ENCODE measurements at regions of chr1 and their contacts with region 1.

Region 1: DNA sequence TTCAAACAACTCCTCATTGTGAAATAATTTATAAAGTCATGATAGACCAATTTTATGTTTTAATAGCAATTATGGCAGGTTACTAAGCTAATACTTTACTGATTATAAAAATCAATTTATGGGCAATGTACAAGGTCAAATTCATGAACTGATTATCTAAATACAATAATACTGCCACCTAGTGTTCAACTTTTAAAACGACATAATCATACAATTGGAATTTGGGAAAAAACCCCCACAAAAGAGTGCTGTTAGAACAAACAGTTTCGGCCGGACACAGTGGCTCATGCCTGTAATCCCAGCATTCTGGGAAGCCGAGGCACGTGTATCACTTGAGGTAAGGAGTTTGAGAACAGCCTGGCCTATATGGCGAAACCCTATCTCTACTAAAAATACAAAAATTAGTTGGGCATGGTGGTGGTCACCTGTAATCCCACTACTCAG is 14.0 kb downstream of the GTF2B start:
- DNase-seq: peak in 1 of 4 donors; percentile 25
- ATAC-seq: no peak
- H3K4me3 ChIP-seq: no peak overlapping the region
- H3K27ac ChIP-seq: no peak overlapping the region
- H3K4me1 ChIP-seq: peaks cover 0 to 53% of the 10 kb centered on the region in 2 donors
- H3K27me3 ChIP-seq: no peaks in the 10 kb centered on the region
- CTCF ChIP-seq: peak; percentile 41 to 54

Region 2: DNA sequence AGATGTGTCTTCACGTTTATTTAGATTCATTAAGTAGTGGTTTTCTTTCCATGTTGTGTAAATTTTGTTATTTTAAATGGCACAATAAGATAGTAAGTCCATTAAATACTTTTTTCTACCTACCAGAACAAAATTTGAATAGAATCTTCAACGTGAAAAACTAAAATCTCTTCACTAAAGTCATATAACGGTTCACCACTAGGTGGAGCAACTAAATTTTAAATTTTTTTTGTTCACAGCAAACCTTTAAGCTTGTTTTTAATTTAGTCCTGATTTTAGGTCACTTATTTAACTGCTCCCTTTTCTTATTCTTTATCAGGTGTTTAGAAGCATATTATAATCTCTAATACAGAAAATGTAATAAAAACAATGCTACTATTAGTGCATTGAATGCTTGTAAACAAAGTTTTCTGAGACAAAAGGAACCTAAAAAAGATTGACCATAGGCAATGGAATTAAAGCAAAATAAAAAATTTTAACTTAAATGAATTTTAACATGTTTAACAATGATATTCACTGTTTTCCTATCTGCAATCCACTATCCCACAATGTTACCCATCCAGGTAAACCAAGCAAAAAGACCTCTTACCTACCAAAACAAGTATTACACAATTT is 221.6 kb before region 1 on chr1:
- intact Hi-C with region 1: loop called in 1 of 2 experiments (anchors 5 kb)
- DNase-seq: peak in 1 of 4 donors; percentile 28
- ATAC-seq: peak; percentile 27
- H3K4me3 ChIP-seq: no peak overlapping the region
- H3K27ac ChIP-seq: no peak overlapping the region
- H3K4me1 ChIP-seq: no peaks in the 10 kb centered on the region
- H3K27me3 ChIP-seq: no peaks in the 10 kb centered on the region
- CTCF ChIP-seq: peak; percentile 56 to 77

Measured in left lung (tissue), 14 donors.